ENCODE measurements at regions of chr12 and their contacts with region 1.

Region 1: DNA sequence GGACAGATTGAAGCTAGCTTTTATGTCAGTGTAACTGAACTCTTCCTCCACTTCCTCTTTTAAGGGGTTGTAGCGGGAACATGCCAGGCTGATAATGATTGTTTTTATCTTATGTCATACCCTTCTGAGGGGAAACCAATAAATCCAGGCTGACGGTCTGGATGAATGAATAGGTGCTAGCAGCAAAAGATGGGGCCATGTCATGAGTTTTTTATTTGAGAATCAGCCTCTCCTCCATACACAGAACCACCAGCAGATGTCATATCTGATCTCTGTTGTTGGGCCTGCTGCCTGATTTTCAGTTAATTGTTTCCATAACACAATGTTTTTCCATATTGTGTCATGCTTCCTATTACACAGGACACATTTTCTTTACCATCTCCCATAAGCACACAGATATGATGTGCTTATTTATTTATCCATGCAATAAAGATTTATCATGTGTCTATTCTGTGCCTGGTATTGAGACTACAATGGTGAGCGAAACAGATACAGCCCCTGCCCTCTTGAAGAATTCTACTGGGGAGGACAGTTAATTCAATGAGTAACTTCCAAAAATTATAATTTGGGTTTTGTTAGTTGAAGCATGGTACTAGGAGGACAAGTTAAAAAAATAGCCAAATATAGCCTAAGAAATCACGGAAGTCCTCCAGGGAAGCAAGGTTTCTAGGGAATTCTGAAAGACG is 33.6 kb upstream of the CRY1 start:
- DNase-seq: peak in 1 of 35 experiments; percentile 30
- ATAC-seq: no peak
- H3K4me3 ChIP-seq: no peak overlapping the region
- H3K4me3 Mint-ChIP-seq: no peak overlapping the region
- H3K27ac ChIP-seq: no peak overlapping the region
- H3K27ac Mint-ChIP-seq: no peak overlapping the region
- H3K4me1 ChIP-seq: no peaks in the 10 kb centered on the region
- H3K4me1 Mint-ChIP-seq: no peaks in the 10 kb centered on the region
- H3K27me3 ChIP-seq: no peaks in the 10 kb centered on the region
- H3K27me3 Mint-ChIP-seq: peaks cover 11 to 15% of the 10 kb centered on the region in 2 donors

Region 2: DNA sequence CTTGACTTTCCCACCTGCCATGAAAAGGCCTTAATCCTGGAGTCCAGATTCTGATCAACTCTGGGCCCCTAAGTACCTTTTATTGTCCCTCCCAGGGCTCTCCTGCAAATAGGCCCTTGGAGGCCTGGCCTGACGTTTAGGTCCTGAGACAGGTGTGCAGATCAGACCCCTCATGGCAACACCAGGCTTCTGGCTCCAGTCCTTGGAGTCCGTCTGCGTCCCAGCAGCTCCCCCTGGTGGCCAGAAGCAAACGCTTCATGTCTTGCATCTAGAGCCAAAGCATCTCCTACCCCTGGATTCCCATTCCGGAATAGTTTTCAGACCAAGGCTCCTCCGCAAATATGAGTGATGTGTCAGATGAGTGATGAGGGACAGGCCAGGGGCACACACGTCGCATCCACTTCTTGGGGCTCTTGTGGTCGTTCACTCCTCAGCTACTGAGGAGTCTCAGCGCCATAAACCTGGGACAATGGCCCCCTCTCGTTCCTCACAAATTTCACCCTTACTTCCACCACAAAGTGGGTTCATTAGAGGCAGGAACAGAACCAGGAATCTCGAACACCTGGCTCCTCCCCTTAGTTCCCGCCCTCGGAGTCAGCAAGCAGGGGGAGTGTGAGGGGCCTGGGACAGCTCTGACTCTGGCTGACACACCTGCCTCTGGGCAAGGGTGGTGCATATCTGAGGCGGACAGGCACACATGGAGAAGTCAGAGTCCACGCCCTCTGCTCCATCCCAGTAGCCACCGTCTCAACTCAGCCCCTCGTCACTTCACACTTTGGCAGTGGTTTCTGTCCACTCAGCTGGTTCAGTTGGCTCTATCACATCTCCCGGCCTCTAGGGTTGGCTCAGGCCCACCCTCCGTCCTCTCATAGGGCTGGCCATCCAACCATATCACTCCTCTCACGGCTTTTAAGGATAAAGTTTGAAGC is 480.8 kb after region 1 on chr12:
- CTCF ChIA-PET with region 1: interaction called, 86 to 90 read pairs
- POLR2A ChIA-PET with region 1: no interaction called
- DNase-seq: peak; percentile 44 to 88 (median 75)
- ATAC-seq: peak; percentile 70 to 73 (median 71)
- H3K4me3 ChIP-seq: no peak overlapping the region
- H3K4me3 Mint-ChIP-seq: no peak overlapping the region
- H3K27ac ChIP-seq: no peak overlapping the region
- H3K27ac Mint-ChIP-seq: no peak overlapping the region
- H3K4me1 ChIP-seq: no peaks in the 10 kb centered on the region
- H3K4me1 Mint-ChIP-seq: peaks cover 0 to 2% (median 0%) of the 10 kb centered on the region in 3 donors
- H3K27me3 ChIP-seq: no peaks in the 10 kb centered on the region
- H3K27me3 Mint-ChIP-seq: no peaks in the 10 kb centered on the region

Region 3: GRCh38 chr12:107645630-107646333 is 518.8 kb after region 1 on chr12:
- CTCF ChIA-PET with region 1: no interaction called
- POLR2A ChIA-PET with region 1: no interaction called
- DNase-seq: no peak
- ATAC-seq: no peak
- H3K4me3 ChIP-seq: no peak overlapping the region
- H3K4me3 Mint-ChIP-seq: no peak overlapping the region
- H3K27ac ChIP-seq: no peak overlapping the region
- H3K27ac Mint-ChIP-seq: no peak overlapping the region
- H3K4me1 ChIP-seq: no peaks in the 10 kb centered on the region
- H3K4me1 Mint-ChIP-seq: no peaks in the 10 kb centered on the region
- H3K27me3 ChIP-seq: no peaks in the 10 kb centered on the region
- H3K27me3 Mint-ChIP-seq: no peaks in the 10 kb centered on the region